ENCODE measurements at regions of chr1 and their contacts with region 1.

Region 1: DNA sequence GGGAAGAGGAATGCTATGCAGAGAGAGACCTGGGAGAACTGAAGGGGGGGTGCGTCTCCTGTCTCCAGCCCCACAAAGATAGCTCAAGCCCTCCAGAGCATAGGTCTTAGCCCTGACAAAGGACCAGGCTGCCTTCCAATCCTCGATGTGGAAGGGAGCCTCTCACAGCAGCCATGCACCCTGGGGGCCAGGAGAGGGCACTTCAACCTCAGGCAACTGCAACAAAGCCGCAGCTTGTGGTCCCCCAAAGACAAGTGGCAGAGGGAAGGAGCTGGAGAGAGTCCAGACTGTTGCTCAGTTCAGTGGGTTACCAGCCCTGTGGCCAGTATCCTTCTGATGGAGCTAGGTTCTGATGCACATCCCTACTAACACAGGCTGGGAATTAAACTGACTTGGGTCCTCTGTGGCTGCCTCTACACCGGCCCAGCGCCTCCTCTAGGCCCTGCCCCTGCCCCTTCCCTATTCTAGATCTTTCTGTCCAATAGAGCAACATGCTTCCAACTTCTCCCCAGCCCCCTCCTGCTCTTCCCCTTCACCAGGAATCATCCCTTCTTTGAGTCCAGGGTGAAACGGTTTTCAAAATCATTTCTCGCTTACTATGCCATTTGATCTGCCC is 100.8 kb upstream of the SPATA6 start:
- DNase-seq: peak; percentile 61
- ATAC-seq: peak; percentile 77

Region 2: DNA sequence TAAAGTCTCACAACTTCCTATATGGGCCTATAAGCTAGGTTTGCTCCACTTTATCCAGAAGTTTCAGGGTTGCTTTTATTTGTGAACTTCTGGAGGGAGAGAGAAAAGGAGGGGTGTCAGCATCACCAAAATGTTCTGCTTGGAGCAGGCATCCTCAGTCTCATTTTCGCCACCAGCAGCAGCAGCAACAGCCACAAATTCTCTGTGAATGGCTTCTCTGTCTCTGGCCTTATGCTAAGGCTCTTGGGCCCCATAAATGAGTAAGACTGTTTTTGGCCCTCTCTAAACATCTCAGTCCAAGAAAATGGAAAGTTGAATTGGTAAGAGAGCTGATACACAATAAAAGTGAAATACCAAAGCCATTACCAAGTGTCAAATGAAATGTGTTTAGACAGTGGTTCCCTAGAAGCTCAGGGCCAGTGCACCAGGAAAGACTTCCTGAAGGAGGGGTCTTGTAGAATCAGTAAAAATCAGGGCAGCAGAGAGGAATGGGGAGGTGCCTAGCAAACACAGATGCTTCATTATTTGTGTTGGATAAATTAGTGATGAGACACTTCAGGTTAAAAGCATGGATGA is 47.8 kb before region 1 on chr1:
- intact Hi-C with region 1: no loop called
- DNase-seq: no peak
- ATAC-seq: no peak

Region 3: GRCh38 chr1:48817505-48818114 is 244.9 kb after region 1 on chr1:
- intact Hi-C with region 1: loop called in 1 of 2 experiments (anchors 5 kb)
- DNase-seq: peak; percentile 64
- ATAC-seq: peak; percentile 76 to 84

Region 4: GRCh38 chr1:50348449-50349241 is 1775.9 kb after region 1 on chr1:
- intact Hi-C with region 1: loop called in 1 of 2 experiments (anchors 10 kb)
- DNase-seq: peak; percentile 40
- ATAC-seq: peak; percentile 57 to 83

Measured in left cardiac atrium (tissue), 4 donors.